MCF 10A (cell line): ENCODE measurements at regions of chr2 and their contacts with region 1.

Region 1: GRCh38 chr2:42828487-42829425 is 36.4 kb upstream of the HAAO start:
- DNase-seq: peak; percentile 77
- H3K4me3 Mint-ChIP-seq: no peak overlapping the region
- H3K27ac Mint-ChIP-seq: peak overlapping the region; percentile 19
- H3K4me1 Mint-ChIP-seq: peaks cover 26% of the 10 kb centered on the region
- H3K27me3 Mint-ChIP-seq: no peaks in the 10 kb centered on the region
- CTCF ChIP-seq: peak; percentile 90

Region 2: GRCh38 chr2:42810121-42810970 is 18.4 kb before region 1 on chr2:
- CTCF ChIA-PET with region 1: interaction called, 17 read pairs
- POLR2A ChIA-PET with region 1: interaction called, 3 read pairs
- intact Hi-C with region 1: no loop called
- DNase-seq: peak; percentile 92
- H3K4me3 Mint-ChIP-seq: peak overlapping the region; percentile 80
- H3K27ac Mint-ChIP-seq: peak overlapping the region; percentile 84
- H3K4me1 Mint-ChIP-seq: peaks cover 13% of the 10 kb centered on the region
- H3K27me3 Mint-ChIP-seq: no peaks in the 10 kb centered on the region
- CTCF ChIP-seq: no peak

Region 3: GRCh38 chr2:42839809-42840501 is 11.2 kb after region 1 on chr2:
- CTCF ChIA-PET with region 1: interaction called, 14 read pairs
- POLR2A ChIA-PET with region 1: no interaction called
- intact Hi-C with region 1: no loop called
- DNase-seq: no peak
- H3K4me3 Mint-ChIP-seq: no peak overlapping the region
- H3K27ac Mint-ChIP-seq: no peak overlapping the region
- H3K4me1 Mint-ChIP-seq: peaks cover 16% of the 10 kb centered on the region
- H3K27me3 Mint-ChIP-seq: no peaks in the 10 kb centered on the region
- CTCF ChIP-seq: no peak

Region 4: GRCh38 chr2:42859006-42859552 is 30.3 kb after region 1 on chr2:
- CTCF ChIA-PET with region 1: interaction called, 16 read pairs
- POLR2A ChIA-PET with region 1: no interaction called
- intact Hi-C with region 1: loop called (anchors 1 kb)
- DNase-seq: peak; percentile 82
- H3K4me3 Mint-ChIP-seq: no peak overlapping the region
- H3K27ac Mint-ChIP-seq: no peak overlapping the region
- H3K4me1 Mint-ChIP-seq: peaks cover 12% of the 10 kb centered on the region
- H3K27me3 Mint-ChIP-seq: no peaks in the 10 kb centered on the region
- CTCF ChIP-seq: peak; percentile 91

Region 5: GRCh38 chr2:42944779-42945415 is 116.1 kb after region 1 on chr2:
- CTCF ChIA-PET with region 1: interaction called, 11 read pairs
- POLR2A ChIA-PET with region 1: no interaction called
- intact Hi-C with region 1: loop called (anchors 1 kb)
- DNase-seq: no peak
- H3K4me3 Mint-ChIP-seq: no peak overlapping the region
- H3K27ac Mint-ChIP-seq: no peak overlapping the region
- H3K4me1 Mint-ChIP-seq: peaks cover 10% of the 10 kb centered on the region
- H3K27me3 Mint-ChIP-seq: no peaks in the 10 kb centered on the region
- CTCF ChIP-seq: no peak

Region 6: GRCh38 chr2:43576981-43577892 is 748.5 kb after region 1 on chr2:
- CTCF ChIA-PET with region 1: interaction called, 15 read pairs
- POLR2A ChIA-PET with region 1: interaction called, 3 read pairs
- intact Hi-C with region 1: no loop called
- DNase-seq: peak; percentile 69
- H3K4me3 Mint-ChIP-seq: no peak overlapping the region
- H3K27ac Mint-ChIP-seq: no peak overlapping the region
- H3K4me1 Mint-ChIP-seq: no peaks in the 10 kb centered on the region
- H3K27me3 Mint-ChIP-seq: no peaks in the 10 kb centered on the region
- CTCF ChIP-seq: peak; percentile 48

Region 7: DNA sequence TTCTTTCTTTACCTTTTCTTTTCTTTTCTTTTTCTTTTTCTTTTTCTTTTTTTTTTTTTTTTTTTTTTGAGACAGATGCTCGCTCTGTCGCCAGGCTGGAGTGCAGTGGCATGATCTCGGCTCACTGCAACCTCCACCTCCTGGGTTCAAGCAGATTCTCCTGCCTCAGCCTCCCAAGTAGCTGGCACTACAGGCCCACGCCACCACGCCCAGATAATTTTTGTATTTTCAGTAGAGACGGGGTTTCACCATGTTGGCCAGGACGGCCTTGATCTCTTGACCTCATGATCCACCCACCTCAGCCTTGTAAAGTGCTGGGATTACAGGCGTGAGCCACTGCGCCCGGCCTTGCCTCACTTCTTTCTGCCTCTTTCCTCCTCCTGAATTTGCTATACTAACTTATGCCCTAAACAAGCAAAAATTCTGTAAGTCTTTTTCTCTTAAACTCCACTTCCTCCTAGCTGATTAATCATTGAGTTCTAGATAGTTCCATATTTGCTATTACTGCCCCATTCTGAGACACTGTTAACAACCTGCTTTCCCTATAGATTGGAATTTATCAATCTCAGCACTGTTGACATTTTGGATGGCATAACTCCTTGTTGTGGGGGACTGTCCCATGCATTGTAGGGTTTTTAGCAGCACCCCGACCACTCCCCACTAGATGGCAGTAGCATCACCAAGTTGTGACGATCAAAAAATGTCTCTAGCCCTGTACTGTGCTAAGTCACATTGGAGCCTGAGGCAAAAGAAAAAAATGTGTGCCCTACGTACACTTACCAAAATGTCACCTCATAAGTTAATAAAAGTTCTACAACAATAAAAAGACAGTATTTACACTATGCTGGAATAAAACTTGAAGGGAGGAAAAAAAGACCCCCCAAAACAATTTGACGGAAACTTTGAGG is 783.5 kb after region 1 on chr2:
- CTCF ChIA-PET with region 1: interaction called, 8 read pairs
- POLR2A ChIA-PET with region 1: no interaction called
- intact Hi-C with region 1: loop called (anchors 1 kb)
- DNase-seq: peak; percentile 82
- H3K4me3 Mint-ChIP-seq: no peak overlapping the region
- H3K27ac Mint-ChIP-seq: no peak overlapping the region
- H3K4me1 Mint-ChIP-seq: peaks cover 6% of the 10 kb centered on the region
- H3K27me3 Mint-ChIP-seq: no peaks in the 10 kb centered on the region
- CTCF ChIP-seq: peak; percentile 68